Spleen (tissue), 13 donors: ENCODE measurements at regions of chr12 and their contacts with region 1.

Region 1: DNA sequence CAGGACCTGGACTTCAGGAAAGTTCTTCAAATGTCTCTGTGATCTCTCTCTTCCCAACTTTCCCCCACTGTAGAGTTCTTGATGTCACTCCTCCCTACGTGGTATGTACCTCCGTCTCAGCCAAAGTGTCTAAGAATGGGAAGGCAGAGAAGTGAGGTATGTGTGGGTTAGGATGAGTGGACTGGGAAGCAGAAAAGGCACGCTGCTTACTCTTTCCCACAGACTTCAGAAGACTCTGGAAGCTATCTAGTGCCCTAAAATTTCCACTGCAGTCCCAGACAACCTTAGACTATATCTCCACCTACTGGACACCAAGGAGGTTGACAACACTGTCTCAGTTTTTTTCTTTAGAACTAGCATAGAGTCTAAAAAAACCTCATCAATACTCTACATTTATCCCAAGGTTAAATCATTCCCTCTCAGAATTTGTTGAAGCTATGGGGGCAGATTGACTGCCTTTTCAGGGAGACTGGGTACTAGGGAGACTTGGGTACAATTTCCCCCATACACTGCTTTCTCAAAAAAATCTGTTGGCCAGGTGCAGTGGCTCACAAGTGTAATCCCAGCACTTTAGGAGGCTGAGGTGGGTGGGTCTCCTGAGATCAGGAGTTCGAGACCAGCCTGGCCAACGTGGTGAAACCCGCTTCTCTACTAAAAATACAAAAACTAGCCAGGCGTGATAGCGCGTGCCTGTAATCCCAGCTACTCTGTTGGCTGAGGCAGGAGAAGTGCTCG is 20.6 kb upstream of the ITGA5 start:
- DNase-seq: no peak
- H3K4me3 ChIP-seq: no peak overlapping the region
- H3K27ac ChIP-seq: no peak overlapping the region
- H3K4me1 ChIP-seq: peaks cover 0 to 15% (median 5%) of the 10 kb centered on the region in 6 donors
- H3K27me3 ChIP-seq: peaks cover 0 to 12% (median 0%) of the 10 kb centered on the region in 7 donors
- CTCF ChIP-seq: peak; percentile 61 to 87 (median 77)
- POLR2A ChIP-seq: no peak

Region 2: DNA sequence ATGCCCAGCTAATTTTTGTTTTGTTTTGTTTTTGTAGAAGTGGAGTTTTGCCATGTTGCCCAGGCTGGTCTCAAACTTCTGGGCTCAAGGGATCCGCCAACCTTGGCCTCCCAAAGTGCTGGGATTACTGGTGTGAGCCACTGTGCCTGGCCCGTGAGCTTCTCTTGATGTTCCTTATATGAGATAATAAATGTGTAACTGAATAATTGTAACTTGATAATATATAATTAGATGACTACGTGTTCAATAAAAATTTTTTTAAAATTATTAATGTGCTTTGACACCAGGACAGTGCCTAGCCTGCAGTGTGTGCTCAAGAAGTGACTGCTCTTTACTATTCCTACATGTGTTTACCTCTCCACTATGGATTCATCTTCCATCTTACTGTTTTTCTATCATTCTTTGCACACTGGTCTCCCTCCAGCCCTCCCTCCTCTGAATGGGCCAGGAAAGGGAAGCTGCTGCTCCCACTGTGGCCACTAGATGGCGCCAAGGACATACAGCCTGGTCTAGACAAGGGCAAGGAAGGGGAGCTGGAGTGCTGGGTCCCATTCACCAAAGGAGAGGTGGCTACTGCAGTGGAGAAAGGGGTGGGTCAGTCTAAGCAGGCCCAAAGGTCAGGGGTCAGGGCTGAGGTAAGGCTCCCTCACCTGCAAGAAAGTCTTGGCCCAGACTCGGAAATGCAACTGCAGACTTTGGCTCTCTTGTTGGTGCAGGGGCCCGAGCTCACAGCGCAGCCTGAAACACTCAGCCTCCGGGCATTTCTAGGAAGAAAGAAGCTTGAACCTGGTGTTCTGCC is 40.5 kb before region 1 on chr12:
- intact Hi-C with region 1: loop called (anchors 2 kb)
- DNase-seq: peak; percentile 94
- H3K4me3 ChIP-seq: no peak overlapping the region
- H3K27ac ChIP-seq: no peak overlapping the region
- H3K4me1 ChIP-seq: peaks cover 0 to 13% (median 5%) of the 10 kb centered on the region in 6 donors
- H3K27me3 ChIP-seq: peaks cover 0 to 3% (median 0%) of the 10 kb centered on the region in 7 donors
- CTCF ChIP-seq: peak; percentile 96 to 99 (median 98)
- POLR2A ChIP-seq: no peak

Region 3: DNA sequence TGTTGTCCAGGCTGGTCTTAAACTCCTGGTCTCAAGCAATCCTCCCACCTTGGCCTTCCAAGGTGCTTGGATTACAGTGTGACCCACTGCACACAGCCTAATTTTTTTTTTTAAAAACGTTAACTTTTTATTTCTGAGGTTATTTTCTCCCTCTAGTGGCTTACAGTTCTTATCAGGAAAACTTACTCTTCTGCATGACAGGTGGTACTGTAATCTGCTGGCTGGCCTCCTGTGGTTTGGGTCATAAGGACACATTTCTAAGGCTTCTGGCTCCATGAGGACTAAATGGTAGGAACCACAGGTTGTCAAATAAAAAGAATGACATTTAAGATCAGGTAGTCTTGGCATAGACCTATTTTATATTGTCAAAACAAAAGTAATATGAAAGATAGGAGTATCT is 50.2 kb after region 1 on chr12:
- intact Hi-C with region 1: no loop called
- DNase-seq: no peak
- H3K4me3 ChIP-seq: no peak overlapping the region
- H3K27ac ChIP-seq: no peak overlapping the region
- H3K4me1 ChIP-seq: no peaks in the 10 kb centered on the region
- H3K27me3 ChIP-seq: no peaks in the 10 kb centered on the region
- CTCF ChIP-seq: no peak
- POLR2A ChIP-seq: no peak

Region 4: GRCh38 chr12:55554296-55554695 is 1114.6 kb after region 1 on chr12:
- intact Hi-C with region 1: no loop called
- DNase-seq: no peak
- H3K4me3 ChIP-seq: no peak overlapping the region
- H3K27ac ChIP-seq: no peak overlapping the region
- H3K4me1 ChIP-seq: no peaks in the 10 kb centered on the region
- H3K27me3 ChIP-seq: peaks cover 0 to 11% (median 0%) of the 10 kb centered on the region in 7 donors
- CTCF ChIP-seq: no peak
- POLR2A ChIP-seq: no peak